ENCODE measurements at regions of chr22 and their contacts with region 1.

Region 1: DNA sequence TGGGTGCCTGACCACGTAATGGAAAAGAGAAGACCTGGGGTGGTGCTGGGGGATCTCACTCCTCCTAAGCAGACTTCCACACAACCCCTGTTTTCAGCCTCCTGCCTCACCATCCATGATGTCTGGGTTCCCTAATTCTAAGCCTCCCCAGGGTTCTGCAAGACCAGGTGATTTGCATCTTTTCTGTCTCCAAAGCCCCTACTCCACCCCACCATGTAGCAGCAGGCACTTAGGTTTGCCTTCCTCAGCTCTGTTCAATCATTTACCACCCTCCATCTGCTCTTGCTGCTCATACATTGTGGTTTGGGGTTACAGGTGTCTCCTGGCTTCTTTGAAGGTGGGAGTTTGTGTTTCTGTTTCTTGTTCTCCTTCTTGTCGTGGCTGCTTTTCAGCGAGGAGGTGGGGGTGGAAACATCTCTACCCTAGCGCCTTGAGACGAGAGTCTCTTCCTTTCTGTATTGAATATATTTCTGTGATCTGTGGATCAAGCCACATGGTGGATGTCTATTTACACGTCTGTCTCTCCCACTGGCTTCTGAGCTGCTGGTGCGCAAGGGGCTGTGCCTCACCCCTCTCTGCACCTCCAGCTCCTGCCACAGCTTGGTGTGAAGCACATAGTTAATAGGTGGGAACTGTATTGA is 6.6 kb upstream of the SSTR3 start:
- DNase-seq: peak; percentile 54 to 93 (median 74)
- ATAC-seq: peak; percentile 80
- H3K4me3 ChIP-seq: peak overlapping the region; percentile 49
- H3K4me3 Mint-ChIP-seq: peak overlapping the region; percentile 64
- H3K27ac ChIP-seq: peak overlapping the region; percentile 71 to 82
- H3K27ac Mint-ChIP-seq: peak overlapping the region; percentile 84
- H3K4me1 ChIP-seq: peaks cover 76% of the 10 kb centered on the region
- H3K4me1 Mint-ChIP-seq: peaks cover 93% of the 10 kb centered on the region
- H3K27me3 ChIP-seq: no peaks in the 10 kb centered on the region
- H3K27me3 Mint-ChIP-seq: no peaks in the 10 kb centered on the region
- CTCF ChIP-seq: no peak

Region 2: DNA sequence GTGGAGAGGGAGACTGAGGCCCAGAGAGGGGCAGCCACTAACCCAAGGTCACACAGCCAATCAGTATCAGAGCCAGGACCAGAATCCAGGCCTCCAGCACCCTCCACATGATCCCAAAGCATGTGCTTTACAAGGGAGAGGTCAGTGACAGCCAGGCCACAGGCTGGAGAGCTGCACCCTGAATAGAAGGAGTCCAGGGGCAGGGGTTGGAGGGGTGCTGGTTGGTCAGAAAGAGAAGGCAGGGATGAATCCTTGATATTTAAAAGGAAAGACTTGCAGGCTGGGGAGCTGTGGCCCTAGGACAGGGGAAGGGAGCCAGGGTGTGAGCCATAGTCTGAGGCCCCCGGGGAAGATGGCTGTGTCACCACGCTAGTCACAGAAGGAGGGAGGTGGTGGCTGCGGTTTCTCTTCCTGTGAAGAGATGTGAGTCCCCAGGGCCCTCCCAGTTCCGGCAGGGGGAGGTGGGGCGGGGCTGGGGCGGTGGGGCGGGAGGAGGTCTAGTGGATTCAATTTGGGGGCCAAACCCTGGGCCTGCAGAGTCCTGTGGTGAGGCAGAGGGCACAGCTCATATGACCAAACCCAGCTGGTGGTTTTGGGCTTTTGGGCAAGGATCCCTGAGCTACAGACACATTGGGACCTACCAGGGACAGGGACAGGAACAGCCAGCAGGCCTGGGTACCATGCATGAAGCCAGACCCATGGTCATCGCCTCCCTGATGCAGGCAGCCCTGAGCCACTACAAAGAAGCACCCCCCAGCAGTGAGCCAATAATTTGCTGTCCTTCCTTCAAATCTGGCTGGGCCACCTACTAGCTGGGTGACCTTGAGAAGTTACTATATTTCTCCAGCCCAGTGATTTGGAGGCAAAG is 11.1 kb after region 1 on chr22:
- CTCF ChIA-PET with region 1: interaction called, 8 read pairs
- POLR2A ChIA-PET with region 1: interaction called, 132 read pairs
- intact Hi-C with region 1: loop called in 1 of 2 experiments (anchors 1 kb)
- DNase-seq: peak; percentile 79 to 96 (median 88)
- ATAC-seq: peak; percentile 78
- H3K4me3 ChIP-seq: peak overlapping the region; percentile 35
- H3K4me3 Mint-ChIP-seq: peak overlapping the region; percentile 83
- H3K27ac ChIP-seq: peak overlapping the region; percentile 96 to 97
- H3K27ac Mint-ChIP-seq: peak overlapping the region; percentile 97
- H3K4me1 ChIP-seq: peaks cover 97% of the 10 kb centered on the region
- H3K4me1 Mint-ChIP-seq: peaks cover 90% of the 10 kb centered on the region
- H3K27me3 ChIP-seq: no peaks in the 10 kb centered on the region
- H3K27me3 Mint-ChIP-seq: no peaks in the 10 kb centered on the region
- CTCF ChIP-seq: no peak

Region 3: DNA sequence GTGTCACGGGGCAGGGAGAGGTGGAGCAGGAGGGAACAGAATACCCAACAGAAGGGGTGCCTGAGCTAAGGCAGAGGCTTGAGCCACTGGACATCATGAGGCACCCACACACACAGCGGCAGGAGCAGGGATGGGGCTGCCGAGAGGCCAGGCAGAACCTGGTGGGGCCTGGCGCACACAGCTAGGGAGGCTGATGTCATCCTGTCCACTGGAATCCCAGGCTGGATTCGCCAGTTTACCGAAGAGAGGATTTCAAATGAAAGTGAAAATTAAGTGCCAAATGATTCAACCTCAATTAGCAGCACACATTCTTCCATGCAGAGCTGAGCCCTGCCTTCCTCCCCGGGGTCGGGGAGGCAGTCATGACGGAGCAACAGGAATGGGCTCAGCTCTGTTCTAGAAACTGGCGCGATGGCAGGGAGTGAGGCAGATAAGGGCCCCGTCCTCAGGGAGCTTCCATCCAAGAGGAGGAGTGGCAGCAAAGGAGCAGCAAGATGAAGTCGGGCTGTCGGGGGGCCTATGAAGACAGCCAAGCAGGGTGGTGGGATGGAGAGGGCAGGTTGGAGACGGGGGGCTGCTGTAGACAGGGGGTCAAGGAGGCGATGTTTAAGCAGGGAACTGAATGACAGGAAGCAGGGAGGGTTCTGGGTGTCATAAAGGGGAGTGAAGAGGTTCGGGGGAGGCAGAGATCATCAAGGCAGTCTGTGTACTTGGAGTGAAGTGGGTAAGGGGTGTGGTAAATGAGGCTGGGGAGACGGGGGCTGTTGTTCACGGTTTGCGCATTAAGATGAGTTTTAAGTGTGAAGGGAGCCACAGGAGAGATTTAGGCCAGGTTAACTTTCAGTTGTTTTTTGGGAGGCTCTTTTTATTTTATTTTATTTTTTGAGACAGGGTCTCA is 18.7 kb after region 1 on chr22:
- CTCF ChIA-PET with region 1: interaction called, 21 read pairs
- POLR2A ChIA-PET with region 1: interaction called, 175 read pairs
- intact Hi-C with region 1: loop called (anchors 1 to 2 kb)
- DNase-seq: peak in 5 of 14 experiments; percentile 18 to 46 (median 38)
- ATAC-seq: peak; percentile 13
- H3K4me3 ChIP-seq: peak overlapping the region; percentile 34
- H3K4me3 Mint-ChIP-seq: peak overlapping the region; percentile 95
- H3K27ac ChIP-seq: peak overlapping the region; percentile 73 to 96
- H3K27ac Mint-ChIP-seq: peak overlapping the region; percentile 97
- H3K4me1 ChIP-seq: peaks cover 100% of the 10 kb centered on the region
- H3K4me1 Mint-ChIP-seq: peaks cover 98% of the 10 kb centered on the region
- H3K27me3 ChIP-seq: no peaks in the 10 kb centered on the region
- H3K27me3 Mint-ChIP-seq: no peaks in the 10 kb centered on the region
- CTCF ChIP-seq: no peak

Measured in CD4-positive, alpha-beta T cell (primary cell).